MCF 10A (cell line): ENCODE measurements at regions of chr16 and their contacts with region 1.

Region 1: GRCh38 chr16:75647492-75648264 is at the starts of genes KARS1 and TERF2IP:
- DNase-seq: peak; percentile 92
- H3K4me3 Mint-ChIP-seq: peak within 1 kb of the TSS; percentile 76
- H3K27ac Mint-ChIP-seq: peak within 1 kb of the TSS; percentile 98
- H3K4me1 Mint-ChIP-seq: peaks cover 33% of the 10 kb centered on the region
- H3K27me3 Mint-ChIP-seq: no peaks in the 10 kb centered on the region
- CTCF ChIP-seq: no peak
- total RNA-seq, gene KARS1: 213 and 219 TPM in 2 replicates
- total RNA-seq, gene TERF2IP: 73.9 and 80.0 TPM in 2 replicates

Region 2: GRCh38 chr16:75432828-75433731 is 214.6 kb before region 1 on chr16 and contains the start of gene CFDP1:
- CTCF ChIA-PET with region 1: no interaction called
- POLR2A ChIA-PET with region 1: interaction called, 16 read pairs
- intact Hi-C with region 1: no loop called
- DNase-seq: peak; percentile 95
- H3K4me3 Mint-ChIP-seq: peak within 1 kb of the TSS; percentile 77
- H3K27ac Mint-ChIP-seq: peak within 1 kb of the TSS; percentile 86
- H3K4me1 Mint-ChIP-seq: peaks cover 13% of the 10 kb centered on the region
- H3K27me3 Mint-ChIP-seq: no peaks in the 10 kb centered on the region
- CTCF ChIP-seq: no peak
- total RNA-seq, gene CFDP1: 41.3 and 44.7 TPM in 2 replicates

Region 3: DNA sequence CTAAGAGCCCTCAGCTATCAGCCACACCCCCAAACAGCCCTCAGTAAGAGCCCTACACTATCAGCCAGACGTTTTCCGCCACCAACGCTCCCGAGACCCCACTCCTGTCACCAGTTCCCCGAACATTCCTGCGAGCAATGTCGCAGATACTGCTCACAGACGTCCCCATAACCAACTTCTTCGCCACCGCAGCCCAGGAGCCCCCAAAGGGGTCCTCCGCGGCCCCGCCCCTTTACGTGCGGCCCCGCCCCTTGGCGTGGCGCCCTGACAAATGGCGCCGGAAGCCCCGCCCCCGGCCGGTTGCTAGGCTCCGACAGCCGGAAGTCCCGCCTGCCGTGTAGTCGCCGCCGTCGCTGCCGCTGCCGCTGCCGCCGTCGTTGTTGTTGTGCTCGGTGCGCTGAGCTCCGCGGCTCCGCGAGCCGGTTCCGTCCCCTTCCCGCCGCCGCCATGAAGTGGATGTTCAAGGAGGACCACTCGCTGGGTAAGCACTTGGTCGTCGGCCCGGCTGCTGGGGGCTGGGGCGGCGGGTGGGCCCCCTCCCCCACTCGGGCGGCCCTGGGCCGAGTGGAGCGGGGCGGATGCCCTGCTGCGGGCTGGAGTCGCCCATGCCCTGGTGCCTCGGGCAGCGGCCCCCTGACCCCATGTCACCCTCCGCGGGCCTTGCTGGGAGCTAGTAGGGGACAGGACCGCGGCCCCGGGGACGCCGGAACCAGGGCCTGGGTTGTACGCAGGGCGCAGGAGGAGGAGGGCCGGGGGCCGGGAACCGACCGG is 81.5 kb before region 1 on chr16 and contains the start of gene GABARAPL2:
- CTCF ChIA-PET with region 1: no interaction called
- POLR2A ChIA-PET with region 1: interaction called, 40 read pairs
- intact Hi-C with region 1: no loop called
- DNase-seq: peak; percentile 77
- H3K4me3 Mint-ChIP-seq: peak within 1 kb of the TSS; percentile 83
- H3K27ac Mint-ChIP-seq: peak within 1 kb of the TSS; percentile 80
- H3K4me1 Mint-ChIP-seq: peaks cover 7% of the 10 kb centered on the region
- H3K27me3 Mint-ChIP-seq: peaks cover 13% of the 10 kb centered on the region
- CTCF ChIP-seq: no peak
- total RNA-seq, gene GABARAPL2: 61.5 and 70.5 TPM in 2 replicates

Region 4: DNA sequence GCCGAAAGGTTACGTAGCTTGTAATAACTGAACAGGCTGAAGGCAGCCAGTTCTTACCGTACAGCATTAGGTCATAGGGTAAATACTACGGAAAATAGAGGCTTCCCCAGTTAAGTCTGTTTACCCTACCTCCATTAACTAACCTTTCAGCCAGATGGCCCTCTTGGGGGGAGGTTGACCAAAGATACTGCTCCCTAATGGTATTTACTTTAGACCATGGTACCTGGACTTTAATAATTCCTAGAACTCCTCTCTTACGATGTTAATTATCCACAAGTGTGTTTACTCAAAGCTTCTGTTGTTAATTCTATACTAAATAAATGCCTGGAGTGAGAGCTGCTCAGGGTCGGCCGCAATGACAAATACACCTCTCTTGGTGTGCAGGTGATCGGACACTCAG is 14.8 kb before region 1 on chr16:
- CTCF ChIA-PET with region 1: interaction called, 9 read pairs
- POLR2A ChIA-PET with region 1: interaction called, 24 read pairs
- intact Hi-C with region 1: no loop called
- DNase-seq: no peak
- H3K4me3 Mint-ChIP-seq: no peak overlapping the region
- H3K27ac Mint-ChIP-seq: no peak overlapping the region
- H3K4me1 Mint-ChIP-seq: no peaks in the 10 kb centered on the region
- H3K27me3 Mint-ChIP-seq: no peaks in the 10 kb centered on the region
- CTCF ChIP-seq: no peak

Region 5: GRCh38 chr16:75758215-75758614 is 110.5 kb after region 1 on chr16:
- CTCF ChIA-PET with region 1: interaction called, 4 read pairs
- POLR2A ChIA-PET with region 1: interaction called, 35 read pairs
- intact Hi-C with region 1: loop called (anchors 2 kb)
- DNase-seq: peak; percentile 10
- H3K4me3 Mint-ChIP-seq: no peak overlapping the region
- H3K27ac Mint-ChIP-seq: no peak overlapping the region
- H3K4me1 Mint-ChIP-seq: peaks cover 10% of the 10 kb centered on the region
- H3K27me3 Mint-ChIP-seq: no peaks in the 10 kb centered on the region
- CTCF ChIP-seq: no peak

Region 6: GRCh38 chr16:75854152-75854551 is 206.5 kb after region 1 on chr16:
- CTCF ChIA-PET with region 1: no interaction called
- POLR2A ChIA-PET with region 1: no interaction called
- intact Hi-C with region 1: no loop called
- DNase-seq: no peak
- H3K4me3 Mint-ChIP-seq: no peak overlapping the region
- H3K27ac Mint-ChIP-seq: no peak overlapping the region
- H3K4me1 Mint-ChIP-seq: no peaks in the 10 kb centered on the region
- H3K27me3 Mint-ChIP-seq: no peaks in the 10 kb centered on the region
- CTCF ChIP-seq: no peak

Region 7: GRCh38 chr16:75931043-75931442 is 283.4 kb after region 1 on chr16:
- CTCF ChIA-PET with region 1: no interaction called
- POLR2A ChIA-PET with region 1: no interaction called
- intact Hi-C with region 1: no loop called
- DNase-seq: peak; percentile 79
- H3K4me3 Mint-ChIP-seq: no peak overlapping the region
- H3K27ac Mint-ChIP-seq: peak overlapping the region; percentile 8
- H3K4me1 Mint-ChIP-seq: peaks cover 6% of the 10 kb centered on the region
- H3K27me3 Mint-ChIP-seq: no peaks in the 10 kb centered on the region
- CTCF ChIP-seq: no peak